WTC11 (cell line): ENCODE measurements at regions of chr2 and their contacts with region 1.

Region 1: DNA sequence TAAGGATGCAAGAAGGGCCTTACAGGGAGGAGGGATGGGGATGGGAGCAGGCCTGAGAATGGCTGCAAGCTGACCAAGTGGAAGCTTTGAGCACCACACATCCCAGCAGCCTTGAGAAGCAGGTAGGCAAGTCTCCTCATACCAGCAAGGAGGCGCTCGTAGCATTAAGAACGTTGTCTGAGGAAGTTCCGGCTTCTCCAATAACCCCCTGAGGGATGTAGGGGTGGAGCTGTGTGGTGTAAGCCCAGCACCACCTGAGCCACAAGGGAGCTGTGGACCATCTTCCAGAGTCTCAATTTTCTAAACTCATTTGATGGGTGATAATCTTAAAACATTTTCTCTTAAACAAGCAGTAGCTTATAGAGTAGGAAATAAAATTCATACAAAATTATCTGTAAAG is 50.6 kb downstream of the ST3GAL5 start:
- DNase-seq: peak; percentile 29
- ATAC-seq: peak; percentile 92
- H3K4me3 Mint-ChIP-seq: no peak overlapping the region
- H3K27ac Mint-ChIP-seq: no peak overlapping the region
- H3K4me1 Mint-ChIP-seq: no peaks in the 10 kb centered on the region
- H3K27me3 Mint-ChIP-seq: no peaks in the 10 kb centered on the region
- CTCF ChIP-seq: no peak

Region 2: DNA sequence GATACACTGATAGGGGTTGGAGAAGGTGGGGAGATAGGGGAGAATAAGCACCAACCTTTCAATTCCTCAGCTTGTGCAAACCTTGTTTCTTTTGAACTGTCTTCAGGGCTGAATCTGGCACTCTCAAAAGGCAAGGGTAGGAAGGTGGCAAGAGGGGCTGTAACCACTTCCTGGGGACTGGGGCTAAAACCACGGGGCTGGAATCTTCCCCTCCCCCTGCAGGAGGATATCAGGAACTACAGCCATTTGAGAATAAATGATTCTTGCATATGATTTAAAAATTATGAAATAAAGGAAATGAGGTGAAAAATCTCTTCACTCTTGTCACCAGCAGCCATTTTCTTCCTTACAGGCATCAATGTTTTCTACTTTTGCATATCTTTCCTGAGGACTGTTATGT is 33.6 kb before region 1 on chr2:
- CTCF ChIA-PET with region 1: no interaction called
- POLR2A ChIA-PET with region 1: no interaction called
- DNase-seq: no peak
- ATAC-seq: peak; percentile 74
- H3K4me3 Mint-ChIP-seq: no peak overlapping the region
- H3K27ac Mint-ChIP-seq: no peak overlapping the region
- H3K4me1 Mint-ChIP-seq: no peaks in the 10 kb centered on the region
- H3K27me3 Mint-ChIP-seq: peaks cover 7% of the 10 kb centered on the region; the same call in 1 of the 2 replicates
- CTCF ChIP-seq: peak; percentile 77

Region 3: DNA sequence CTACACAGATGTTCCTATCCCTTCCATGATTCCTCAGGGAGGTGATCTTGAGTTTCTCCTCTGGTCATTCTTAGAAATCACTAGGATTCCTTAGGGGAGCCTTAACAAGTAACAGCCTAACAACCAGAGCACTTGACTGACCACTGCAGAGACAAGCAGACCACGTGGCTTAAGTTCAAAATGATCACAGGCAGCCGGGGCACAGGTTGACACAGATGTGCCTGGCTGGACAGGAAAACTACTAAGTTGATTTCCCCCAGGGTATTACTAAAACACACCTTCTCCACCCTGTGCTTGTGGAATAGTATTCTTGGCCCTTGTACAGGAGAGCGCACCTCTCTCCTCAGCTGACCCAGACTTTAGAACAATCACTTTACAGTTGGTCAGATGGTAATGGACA is 20.7 kb after region 1 on chr2:
- CTCF ChIA-PET with region 1: no interaction called
- POLR2A ChIA-PET with region 1: no interaction called
- DNase-seq: no peak
- ATAC-seq: no peak
- H3K4me3 Mint-ChIP-seq: no peak overlapping the region
- H3K27ac Mint-ChIP-seq: no peak overlapping the region
- H3K4me1 Mint-ChIP-seq: 0 out of 2 replicates have a peak, but pooled peaks cover 3% of the 10 kb centered on the region
- H3K27me3 Mint-ChIP-seq: no peaks in the 10 kb centered on the region
- CTCF ChIP-seq: no peak

Region 4: GRCh38 chr2:86035883-86036668 is 197.9 kb after region 1 on chr2:
- CTCF ChIA-PET with region 1: interaction called, 12 read pairs
- POLR2A ChIA-PET with region 1: no interaction called
- DNase-seq: no peak
- ATAC-seq: peak; percentile 65
- H3K4me3 Mint-ChIP-seq: no peak overlapping the region
- H3K27ac Mint-ChIP-seq: peak overlapping the region; percentile 80; the same call in 1 of the 2 replicates
- H3K4me1 Mint-ChIP-seq: peaks cover 13% of the 10 kb centered on the region
- H3K27me3 Mint-ChIP-seq: no peaks in the 10 kb centered on the region
- CTCF ChIP-seq: no peak